ENCODE measurements at regions of chr2 and their contacts with region 1.

Region 1: GRCh38 chr2:238370823-238371372 is 50.6 kb downstream of the TRAF3IP1 start:
- DNase-seq: peak; percentile 43 to 48
- ATAC-seq: peak; percentile 89 to 99 (median 94)
- H3K4me3 ChIP-seq: no peak overlapping the region
- H3K27ac ChIP-seq: no peak overlapping the region
- H3K4me1 ChIP-seq: peaks cover 0 to 3% (median 0%) of the 10 kb centered on the region in 9 donors
- H3K27me3 ChIP-seq: no peaks in the 10 kb centered on the region
- CTCF ChIP-seq: peak; percentile 53 to 89 (median 81)

Region 2: GRCh38 chr2:238462782-238463396 is 92.0 kb after region 1 on chr2:
- intact Hi-C with region 1: loop called in 9 of 10 experiments (anchors 1 to 5 kb)
- DNase-seq: no peak
- ATAC-seq: no peak
- H3K4me3 ChIP-seq: no peak overlapping the region
- H3K27ac ChIP-seq: no peak overlapping the region
- H3K4me1 ChIP-seq: peaks cover 6 to 22% (median 19%) of the 10 kb centered on the region in 9 donors
- H3K27me3 ChIP-seq: peaks cover 0 to 5% (median 0%) of the 10 kb centered on the region in 7 donors
- CTCF ChIP-seq: peak; percentile 31 to 84 (median 72)

Region 3: GRCh38 chr2:238585836-238586821 is 215.2 kb after region 1 on chr2:
- intact Hi-C with region 1: no loop called
- DNase-seq: no peak
- ATAC-seq: no peak
- H3K4me3 ChIP-seq: no peak overlapping the region
- H3K27ac ChIP-seq: no peak overlapping the region
- H3K4me1 ChIP-seq: no peaks in the 10 kb centered on the region
- H3K27me3 ChIP-seq: no peaks in the 10 kb centered on the region
- CTCF ChIP-seq: no peak

Region 4: DNA sequence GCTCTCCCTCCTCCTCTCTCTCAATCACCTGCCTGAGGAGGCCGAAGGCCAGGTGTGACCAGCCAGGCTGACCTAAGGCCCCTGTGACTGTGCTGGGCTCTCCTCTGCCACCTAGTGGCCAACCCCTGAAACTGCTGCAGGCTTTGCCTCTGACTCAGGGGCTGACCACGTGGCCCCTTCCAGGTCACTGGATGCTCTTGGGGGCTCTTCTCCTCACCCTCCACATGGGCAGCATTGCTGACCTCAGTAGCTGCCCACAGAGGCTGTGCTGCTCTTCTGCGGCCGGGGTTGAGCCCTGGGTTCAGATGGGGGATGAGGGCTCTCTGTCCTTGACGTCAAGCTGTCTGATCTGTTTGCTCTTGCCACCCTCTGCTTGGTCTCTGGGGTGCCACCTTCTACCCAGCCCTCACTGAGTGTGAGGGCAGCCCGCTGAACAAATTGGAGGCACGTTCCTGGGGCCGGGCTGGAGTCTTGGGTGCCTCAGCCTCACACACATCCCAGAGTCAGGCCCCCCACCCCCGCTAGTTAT is 599.7 kb after region 1 on chr2:
- intact Hi-C with region 1: loop called in 1 of 10 experiments (anchors 10 kb)
- DNase-seq: peak; percentile 37 to 51
- ATAC-seq: peak; percentile 54 to 81 (median 74)
- H3K4me3 ChIP-seq: no peak overlapping the region
- H3K27ac ChIP-seq: no peak overlapping the region
- H3K4me1 ChIP-seq: peaks cover 0 to 3% (median 0%) of the 10 kb centered on the region in 9 donors
- H3K27me3 ChIP-seq: peaks cover 0 to 35% (median 11%) of the 10 kb centered on the region in 7 donors
- CTCF ChIP-seq: peak in 8 of 9 donors; percentile 93 to 99 (median 98)

Measured in heart right ventricle (tissue), 16 donors.